Ascending aorta (tissue), 2 donors: ENCODE measurements at regions of chr6 and their contacts with region 1.

Region 1: GRCh38 chr6:39892490-39893129 is 41.7 kb downstream of the MOCS1 start:
- DNase-seq: peak in 1 of 2 donors; percentile 87
- H3K4me3 ChIP-seq: no peak overlapping the region
- H3K27ac ChIP-seq: peak overlapping the region; percentile 12 to 43
- H3K4me1 ChIP-seq: peaks cover 7 to 26% of the 10 kb centered on the region in 2 donors
- H3K27me3 ChIP-seq: no peaks in the 10 kb centered on the region
- CTCF ChIP-seq: peak; percentile 79 to 81 (median 79)

Region 2: DNA sequence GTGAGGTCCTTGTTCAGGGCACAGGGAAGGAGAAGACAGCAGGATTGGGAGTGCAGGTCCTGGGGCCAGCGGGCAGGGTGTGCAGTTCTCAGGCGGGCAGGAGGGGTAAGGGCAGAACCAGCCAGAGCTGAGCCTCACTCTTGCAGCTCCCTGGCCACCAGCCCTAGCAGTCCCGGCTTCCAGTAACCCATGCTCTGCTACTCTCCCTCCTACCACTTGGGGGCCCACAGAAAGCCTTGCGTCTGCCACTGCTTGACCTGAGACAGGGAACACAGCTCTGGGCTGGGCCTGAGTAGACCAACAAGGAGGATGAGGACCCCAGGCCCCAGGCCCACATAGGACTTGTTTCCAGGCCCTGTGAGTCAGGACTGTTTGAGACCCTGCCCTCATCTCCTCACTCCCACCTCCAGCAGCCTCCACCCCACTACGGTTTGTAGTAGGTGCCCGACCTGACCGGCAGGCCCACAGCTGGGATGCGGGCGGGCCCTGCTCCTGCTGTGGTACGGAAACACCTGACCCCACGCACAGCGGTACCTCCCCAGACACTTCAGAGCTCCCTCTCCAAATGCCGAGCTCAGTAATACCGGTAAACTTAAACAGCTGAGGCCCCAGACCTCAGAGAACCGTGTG is 702.6 kb before region 1 on chr6:
- intact Hi-C with region 1: no loop called
- DNase-seq: no peak
- H3K4me3 ChIP-seq: no peak overlapping the region
- H3K27ac ChIP-seq: no peak overlapping the region
- H3K4me1 ChIP-seq: no peaks in the 10 kb centered on the region
- H3K27me3 ChIP-seq: no peaks in the 10 kb centered on the region
- CTCF ChIP-seq: peak in 2 of 3 experiments; percentile 12 to 29

Region 3: GRCh38 chr6:39361657-39362486 is 530.7 kb before region 1 on chr6:
- intact Hi-C with region 1: loop called (anchors 1 kb)
- DNase-seq: peak in 1 of 2 donors; percentile 78
- H3K4me3 ChIP-seq: no peak overlapping the region
- H3K27ac ChIP-seq: no peak overlapping the region
- H3K4me1 ChIP-seq: no peaks in the 10 kb centered on the region
- H3K27me3 ChIP-seq: no peaks in the 10 kb centered on the region
- CTCF ChIP-seq: peak; percentile 68 to 78 (median 73)

Region 4: DNA sequence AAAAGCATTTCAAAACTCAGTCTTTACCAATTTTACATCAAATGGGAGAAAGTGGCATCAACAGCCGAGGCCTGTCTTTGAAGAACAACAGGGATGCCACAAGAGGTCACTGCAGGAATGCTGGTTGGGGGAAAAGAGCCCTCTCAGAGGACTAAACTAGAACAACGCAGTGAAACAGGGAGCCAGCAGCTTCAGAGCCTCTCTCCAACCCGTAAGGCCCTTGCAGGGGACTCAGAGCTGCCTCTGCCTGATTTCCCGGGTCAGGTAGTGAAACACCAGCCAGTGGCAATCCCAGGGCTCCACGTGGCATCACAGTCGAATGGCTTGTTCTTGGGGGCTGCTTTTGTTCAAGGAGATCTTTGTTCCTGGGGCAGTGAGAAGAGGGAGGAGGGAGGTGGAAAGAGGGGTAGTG is 515.1 kb before region 1 on chr6:
- intact Hi-C with region 1: loop called (anchors 1 kb)
- DNase-seq: peak in 1 of 2 donors; percentile 73
- H3K4me3 ChIP-seq: no peak overlapping the region
- H3K27ac ChIP-seq: no peak overlapping the region
- H3K4me1 ChIP-seq: peaks cover 0 to 3% of the 10 kb centered on the region in 2 donors
- H3K27me3 ChIP-seq: no peaks in the 10 kb centered on the region
- CTCF ChIP-seq: peak; percentile 41 to 67 (median 53)

Region 5: DNA sequence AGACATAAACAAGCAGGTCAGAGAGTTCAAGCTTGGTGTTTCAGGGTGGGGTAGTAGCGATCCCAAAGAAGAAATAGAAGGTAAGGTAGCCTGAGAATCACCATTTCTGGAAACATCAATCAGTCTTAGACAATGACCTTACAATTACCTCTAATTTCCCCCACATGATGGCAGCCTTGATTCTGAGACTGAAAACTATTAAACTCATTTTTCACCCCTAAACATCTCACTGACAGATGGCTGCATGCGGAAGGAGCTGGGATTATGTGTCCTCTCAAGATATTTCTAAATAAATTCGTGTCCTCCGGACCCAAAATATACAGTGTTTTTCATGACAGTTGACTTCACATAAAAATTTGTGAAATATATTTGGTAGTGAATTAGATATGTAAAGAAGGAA is 228.4 kb before region 1 on chr6:
- intact Hi-C with region 1: loop called (anchors 5 kb)
- DNase-seq: no peak
- H3K4me3 ChIP-seq: no peak overlapping the region
- H3K27ac ChIP-seq: no peak overlapping the region
- H3K4me1 ChIP-seq: no peaks in the 10 kb centered on the region
- H3K27me3 ChIP-seq: no peaks in the 10 kb centered on the region
- CTCF ChIP-seq: peak in 1 of 3 experiments; percentile 14

Region 6: DNA sequence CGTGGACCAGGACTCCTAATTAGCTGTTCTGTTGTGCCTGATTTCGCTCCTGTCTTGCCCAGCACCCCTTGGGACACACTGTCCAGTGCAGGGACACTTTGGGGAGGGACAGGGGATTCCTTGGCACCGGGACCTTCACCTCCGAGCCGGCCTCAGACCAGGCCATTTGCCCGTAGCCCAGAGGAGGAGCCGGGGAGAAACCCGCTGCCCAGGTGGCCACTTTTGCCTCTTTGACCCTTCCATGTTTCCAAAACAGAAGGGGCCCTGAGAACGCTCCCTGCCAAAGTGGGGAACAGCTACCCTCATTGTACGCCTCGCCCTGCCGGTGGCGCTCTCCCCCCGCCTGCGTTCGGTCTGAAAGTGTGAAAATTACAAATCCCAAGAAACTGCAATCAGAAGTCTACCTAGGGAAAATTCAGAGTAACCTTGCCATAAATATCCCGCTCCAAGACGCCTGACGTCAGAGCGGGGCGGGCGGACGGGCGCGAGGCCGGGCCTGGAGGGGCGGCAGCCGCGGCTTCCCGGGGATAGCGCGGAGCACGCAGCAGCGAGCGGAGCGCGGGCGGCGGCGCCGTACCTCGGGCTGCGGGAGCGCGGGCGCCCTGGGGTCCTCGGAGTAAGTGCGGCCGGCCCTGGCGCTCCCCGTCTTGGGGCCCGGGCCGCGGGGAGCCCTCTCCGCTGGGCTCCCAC is 100.6 kb before region 1 on chr6 and contains the start of gene DAAM2:
- intact Hi-C with region 1: loop called (anchors 2 kb)
- DNase-seq: peak; percentile 28 to 84
- H3K4me3 ChIP-seq: peak within 1 kb of the TSS; percentile 63 to 75
- H3K27ac ChIP-seq: peak within 1 kb of the TSS; percentile 83 to 87
- H3K4me1 ChIP-seq: peaks cover 3 to 23% of the 10 kb centered on the region in 2 donors
- H3K27me3 ChIP-seq: no peaks in the 10 kb centered on the region
- CTCF ChIP-seq: peak; percentile 2 to 47 (median 12)
- total RNA-seq, gene DAAM2: 44.0 TPM

Region 7: GRCh38 chr6:39865011-39865888 is 27.4 kb before region 1 on chr6:
- intact Hi-C with region 1: loop called (anchors 1 kb)
- DNase-seq: peak in 1 of 2 donors; percentile 89
- H3K4me3 ChIP-seq: no peak overlapping the region
- H3K27ac ChIP-seq: peak overlapping the region in 1 of 2 donors; percentile 15
- H3K4me1 ChIP-seq: peaks cover 0 to 3% of the 10 kb centered on the region in 2 donors
- H3K27me3 ChIP-seq: no peaks in the 10 kb centered on the region
- CTCF ChIP-seq: peak; percentile 74 to 90 (median 85)

Region 8: DNA sequence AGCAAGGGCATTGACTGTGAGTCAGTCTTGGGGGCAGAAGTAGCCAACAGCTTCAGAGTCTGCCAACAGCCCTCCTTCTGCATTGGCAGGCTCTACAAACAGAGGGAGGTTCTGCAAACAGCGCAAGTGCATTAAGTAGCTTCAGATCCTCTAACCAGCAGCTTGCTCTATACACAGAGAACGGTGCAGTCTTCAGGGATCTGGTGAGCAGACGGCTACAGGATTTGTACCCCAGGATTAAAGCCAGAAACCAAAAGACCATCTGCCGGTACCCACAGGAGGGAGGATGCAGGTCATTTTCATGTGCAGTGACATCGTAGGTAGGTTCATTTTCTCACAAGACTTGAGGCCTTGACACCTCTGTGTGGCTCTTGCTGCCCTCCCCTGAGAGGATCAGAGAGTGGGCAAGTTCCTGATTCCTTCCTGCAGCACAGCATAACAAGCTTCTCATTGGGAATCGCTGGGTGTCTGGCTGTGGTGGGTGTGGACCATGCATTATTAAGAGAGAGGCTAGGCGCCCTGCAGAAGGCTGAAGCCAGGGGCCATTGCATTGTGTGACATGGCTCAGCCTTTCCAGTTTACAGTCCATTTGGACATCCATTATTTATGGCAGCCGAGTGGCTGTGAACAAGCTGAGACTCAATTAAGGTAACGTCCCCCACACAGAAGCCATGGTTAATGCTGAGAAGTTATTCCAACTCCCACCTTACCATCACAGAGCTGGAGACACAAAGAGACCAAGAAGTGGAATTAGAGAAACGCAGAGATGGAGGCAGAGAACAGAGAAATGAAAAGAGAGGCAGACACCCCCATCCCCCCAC is 444.5 kb after region 1 on chr6:
- intact Hi-C with region 1: no loop called
- DNase-seq: no peak
- H3K4me3 ChIP-seq: no peak overlapping the region
- H3K27ac ChIP-seq: no peak overlapping the region
- H3K4me1 ChIP-seq: no peaks in the 10 kb centered on the region
- H3K27me3 ChIP-seq: no peaks in the 10 kb centered on the region
- CTCF ChIP-seq: no peak

Region 9: GRCh38 chr6:40841721-40842120 is 949.1 kb after region 1 on chr6:
- intact Hi-C with region 1: no loop called
- DNase-seq: no peak
- H3K4me3 ChIP-seq: no peak overlapping the region
- H3K27ac ChIP-seq: no peak overlapping the region
- H3K4me1 ChIP-seq: no peaks in the 10 kb centered on the region
- H3K27me3 ChIP-seq: no peaks in the 10 kb centered on the region
- CTCF ChIP-seq: no peak